MCF 10A (cell line): ENCODE measurements at regions of chr4 and their contacts with region 1.

Region 1: GRCh38 chr4:170248576-170248975 is 158.8 kb upstream of the AADAT start:
- DNase-seq: no peak
- H3K4me3 Mint-ChIP-seq: no peak overlapping the region
- H3K27ac Mint-ChIP-seq: no peak overlapping the region
- H3K4me1 Mint-ChIP-seq: peaks cover 12% of the 10 kb centered on the region
- H3K27me3 Mint-ChIP-seq: no peaks in the 10 kb centered on the region
- CTCF ChIP-seq: no peak

Region 2: DNA sequence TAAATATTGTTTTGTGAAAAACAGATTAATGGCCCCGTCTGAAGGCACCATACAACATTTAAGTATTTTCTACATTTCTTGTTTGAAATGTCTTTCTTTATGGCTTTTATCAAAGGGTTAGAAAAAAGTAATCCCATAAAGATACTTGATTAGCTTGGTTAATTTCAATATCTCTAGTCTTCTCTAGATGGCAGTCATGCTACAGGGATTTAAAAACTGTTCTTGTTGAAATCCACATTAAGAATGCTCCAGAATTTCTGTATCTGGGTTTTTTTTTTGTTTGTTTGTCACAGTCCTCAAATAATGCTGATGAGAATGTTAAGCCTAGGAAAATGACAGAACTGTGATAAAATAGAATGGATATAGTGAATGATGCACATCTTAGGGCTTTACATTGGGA is 49.8 kb before region 1 on chr4:
- CTCF ChIA-PET with region 1: interaction called, 15 read pairs
- POLR2A ChIA-PET with region 1: no interaction called
- intact Hi-C with region 1: no loop called
- DNase-seq: peak; percentile 33
- H3K4me3 Mint-ChIP-seq: no peak overlapping the region
- H3K27ac Mint-ChIP-seq: no peak overlapping the region
- H3K4me1 Mint-ChIP-seq: peaks cover 6% of the 10 kb centered on the region
- H3K27me3 Mint-ChIP-seq: no peaks in the 10 kb centered on the region
- CTCF ChIP-seq: peak; percentile 30